ENCODE measurements at regions of chr22 and their contacts with region 1.

Region 1: DNA sequence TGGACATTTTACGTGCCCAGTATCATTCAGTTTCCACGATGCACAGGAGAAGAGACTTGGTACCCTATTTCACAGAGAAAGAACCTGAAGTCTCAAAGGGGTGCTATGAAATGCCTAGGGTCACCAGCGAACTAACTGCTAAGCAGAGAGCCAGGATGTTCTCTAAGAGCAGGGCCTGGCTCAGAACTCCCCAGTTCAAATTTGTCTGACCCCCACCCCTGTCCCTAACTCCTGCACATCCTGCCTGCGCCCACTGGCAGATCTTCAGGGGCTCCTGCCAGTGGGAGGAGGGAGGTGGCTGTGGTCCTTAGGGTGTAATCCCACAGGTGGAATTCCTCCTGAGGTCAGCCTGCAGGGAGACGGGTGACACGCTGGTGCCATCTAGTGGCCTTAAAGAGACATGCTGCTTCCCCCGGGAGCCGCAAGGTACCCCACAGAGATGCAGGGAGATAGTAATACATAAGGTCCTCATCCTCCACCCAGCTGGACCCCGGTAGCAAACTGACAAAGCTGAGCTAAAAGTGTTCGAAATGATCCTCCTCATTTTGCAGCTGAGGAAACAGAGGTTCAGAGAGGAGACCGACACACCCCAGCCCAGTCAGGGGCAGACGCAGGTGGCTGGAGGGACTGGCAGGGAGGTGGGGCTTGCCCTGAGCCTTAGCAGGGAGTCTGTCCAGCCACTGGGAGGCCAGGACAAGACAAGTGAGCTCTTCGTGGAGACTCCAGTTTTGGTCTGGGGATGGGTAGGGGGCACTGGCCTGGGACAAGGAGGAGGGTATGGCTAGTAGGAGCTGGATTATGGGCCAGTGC is 34.1 kb downstream of the MB start:
- DNase-seq: peak in 2 of 3 donors; percentile 45 to 62
- ATAC-seq: peak; percentile 84 to 93 (median 86)
- H3K4me3 ChIP-seq: no peak overlapping the region
- H3K27ac ChIP-seq: no peak overlapping the region
- H3K4me1 ChIP-seq: no peaks in the 10 kb centered on the region
- H3K27me3 ChIP-seq: no peaks in the 10 kb centered on the region
- CTCF ChIP-seq: peak; percentile 88 to 96 (median 94)
- POLR2A ChIP-seq: no peak

Region 2: DNA sequence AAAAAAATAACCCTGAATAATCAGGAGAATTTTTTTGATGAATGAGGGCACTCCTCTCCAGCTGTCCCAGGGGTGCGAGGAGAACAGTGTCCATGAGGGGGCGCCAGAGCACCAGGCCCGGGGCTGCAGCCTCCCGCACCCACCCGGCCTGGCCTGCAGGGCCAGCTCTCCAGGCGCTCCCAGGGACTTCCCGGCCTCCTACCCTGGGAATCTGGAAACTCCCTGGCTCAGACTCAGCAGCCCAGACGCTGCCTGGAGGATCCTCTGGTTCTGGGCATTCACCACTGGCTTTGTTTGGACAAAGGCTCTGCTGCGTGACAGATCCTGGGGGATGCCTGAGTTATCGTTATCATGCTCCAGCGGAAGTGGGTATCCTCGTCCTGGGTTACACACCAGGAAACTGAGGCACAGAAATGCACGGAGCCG is 152.2 kb before region 1 on chr22:
- intact Hi-C with region 1: loop called (anchors 5 kb)
- DNase-seq: peak; percentile 84 to 92 (median 87)
- ATAC-seq: peak; percentile 98 to 100 (median 99)
- H3K4me3 ChIP-seq: no peak overlapping the region
- H3K27ac ChIP-seq: no peak overlapping the region
- H3K4me1 ChIP-seq: peaks cover 0 to 10% (median 0%) of the 10 kb centered on the region in 4 donors
- H3K27me3 ChIP-seq: no peaks in the 10 kb centered on the region
- CTCF ChIP-seq: peak; percentile 95 to 99 (median 97)
- POLR2A ChIP-seq: no peak

Region 3: DNA sequence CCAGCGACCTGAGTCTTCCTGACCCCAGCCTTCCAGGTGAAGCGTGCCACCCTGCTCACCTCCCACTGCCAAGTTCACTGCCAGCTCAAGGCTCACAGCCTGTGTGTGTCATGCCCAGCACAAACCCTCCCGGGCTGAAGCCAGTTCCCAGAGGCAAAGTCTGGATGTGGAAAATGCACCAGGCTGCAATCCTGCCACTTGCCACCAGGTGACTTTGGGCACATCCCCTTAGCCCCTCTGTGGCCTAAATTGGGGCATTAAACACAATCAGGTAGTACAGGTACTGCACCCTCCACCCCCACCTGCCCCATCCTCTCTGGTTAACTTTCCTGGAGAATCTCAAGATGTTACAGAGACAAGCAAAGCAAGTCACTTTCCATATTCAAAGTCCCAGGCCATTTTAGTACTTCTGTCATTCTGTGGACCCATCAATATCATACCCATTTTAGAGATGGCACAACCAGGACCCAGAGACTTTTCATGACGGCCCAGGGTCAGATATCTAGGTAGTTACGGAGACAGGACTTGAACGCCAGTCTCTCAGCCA is 44.2 kb before region 1 on chr22:
- intact Hi-C with region 1: no loop called
- DNase-seq: peak; percentile 67 to 78 (median 71)
- ATAC-seq: peak in 3 of 4 donors; percentile 29 to 48 (median 46)
- H3K4me3 ChIP-seq: no peak overlapping the region
- H3K27ac ChIP-seq: no peak overlapping the region
- H3K4me1 ChIP-seq: peaks cover 0 to 31% (median 11%) of the 10 kb centered on the region in 4 donors
- H3K27me3 ChIP-seq: no peaks in the 10 kb centered on the region
- CTCF ChIP-seq: peak; percentile 40 to 73 (median 54)
- POLR2A ChIP-seq: no peak

Region 4: DNA sequence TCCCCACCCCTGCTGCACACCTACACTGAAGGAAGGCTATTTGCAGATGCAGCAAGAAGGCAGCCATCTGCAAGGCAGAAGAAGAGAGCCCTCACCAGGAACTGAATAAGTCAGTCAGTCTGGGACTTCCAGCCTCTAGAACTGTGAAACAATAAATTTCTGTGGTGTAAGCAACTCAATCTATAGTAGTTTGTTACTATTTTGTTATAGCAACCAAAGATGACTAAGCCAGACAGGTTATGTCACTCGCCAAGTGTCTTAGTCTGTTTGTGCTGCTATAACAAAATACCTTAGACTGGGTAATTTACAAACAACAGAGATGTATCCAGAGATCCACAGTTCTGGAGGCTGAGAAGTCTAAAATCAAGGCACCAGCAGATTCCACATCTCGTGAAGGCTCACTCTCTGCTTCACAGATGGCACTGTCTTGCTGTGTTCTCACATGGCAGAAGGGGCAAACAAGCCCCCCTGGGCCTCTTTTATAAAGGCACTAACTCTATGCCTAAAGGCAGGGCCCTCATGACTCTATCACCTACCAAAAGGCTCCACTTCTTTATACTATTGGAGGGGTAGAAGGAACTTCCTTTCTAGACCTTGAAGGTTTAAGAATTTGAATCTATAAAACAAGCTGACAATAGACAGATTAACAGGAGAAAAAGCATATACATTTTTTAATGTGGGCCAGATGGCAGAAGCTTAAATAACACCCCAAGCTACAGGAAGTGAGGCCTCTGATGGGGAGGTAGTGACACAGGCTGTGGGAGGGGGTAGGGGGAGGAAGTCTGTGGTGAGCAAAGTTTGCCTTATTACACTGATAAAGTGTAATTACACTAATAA is 77.4 kb after region 1 on chr22:
- intact Hi-C with region 1: no loop called
- DNase-seq: no peak
- ATAC-seq: peak; percentile 49 to 68 (median 54)
- H3K4me3 ChIP-seq: no peak overlapping the region
- H3K27ac ChIP-seq: peak overlapping the region in 1 of 3 donors; percentile 13
- H3K4me1 ChIP-seq: peaks cover 0 to 55% (median 15%) of the 10 kb centered on the region in 4 donors
- H3K27me3 ChIP-seq: no peaks in the 10 kb centered on the region
- CTCF ChIP-seq: no peak
- POLR2A ChIP-seq: no peak

Region 5: GRCh38 chr22:36311386-36312358 is 728.6 kb after region 1 on chr22:
- intact Hi-C with region 1: no loop called
- DNase-seq: peak in 1 of 3 donors; percentile 19
- ATAC-seq: peak in 1 of 4 donors; percentile 18
- H3K4me3 ChIP-seq: no peak overlapping the region
- H3K27ac ChIP-seq: no peak overlapping the region
- H3K4me1 ChIP-seq: peaks cover 0 to 9% (median 0%) of the 10 kb centered on the region in 4 donors
- H3K27me3 ChIP-seq: no peaks in the 10 kb centered on the region
- CTCF ChIP-seq: no peak
- POLR2A ChIP-seq: no peak